Dorsolateral prefrontal cortex (tissue), 120 donors: ENCODE measurements at regions of chr10 and their contacts with region 1.

Region 1: GRCh38 chr10:52215745-52216361 is 98.2 kb upstream of the DKK1 start:
- DNase-seq: peak in 3 of 10 donors; percentile 17 to 56 (median 22)
- H3K4me3 ChIP-seq: no peak overlapping the region
- H3K27ac ChIP-seq: no peak overlapping the region
- H3K27me3 ChIP-seq: no peaks in the 10 kb centered on the region
- CTCF ChIP-seq: peak; percentile 66 to 94 (median 81)

Region 2: GRCh38 chr10:51007781-51008180 is 1208.1 kb before region 1 on chr10:
- intact Hi-C with region 1: loop called in 1 of 2 experiments (anchors 5 kb)
- DNase-seq: no peak
- H3K4me3 ChIP-seq: no peak overlapping the region
- H3K27ac ChIP-seq: no peak overlapping the region
- H3K27me3 ChIP-seq: peaks cover 0 to 7% (median 0%) of the 10 kb centered on the region in 45 donors
- CTCF ChIP-seq: no peak